Endothelial cell of umbilical vein (primary cell): ENCODE measurements at regions of chr9 and their contacts with region 1.

Region 1: GRCh38 chr9:113929634-113930389 is 53.7 kb downstream of the ZNF618 start:
- DNase-seq: peak; percentile 98
- H3K4me3 ChIP-seq: no peak overlapping the region
- H3K27ac ChIP-seq: peak overlapping the region; percentile 70
- H3K4me1 ChIP-seq: peaks cover 30% of the 10 kb centered on the region
- H3K27me3 ChIP-seq: no peaks in the 10 kb centered on the region
- CTCF ChIP-seq: no peak
- POLR2A ChIP-seq: peak; percentile 18

Region 2: GRCh38 chr9:113331780-113332179 is 598.0 kb before region 1 on chr9:
- CTCF ChIA-PET with region 1: no interaction called
- POLR2A ChIA-PET with region 1: no interaction called
- dilution Hi-C with region 1: no loop called
- intact Hi-C with region 1: no loop called
- DNase-seq: no peak
- H3K4me3 ChIP-seq: no peak overlapping the region
- H3K27ac ChIP-seq: no peak overlapping the region
- H3K4me1 ChIP-seq: no peaks in the 10 kb centered on the region
- H3K27me3 ChIP-seq: peaks cover 0 to 5% of the 10 kb centered on the region in 2 experiments
- CTCF ChIP-seq: no peak
- POLR2A ChIP-seq: no peak

Region 3: GRCh38 chr9:113892861-113893491 is 36.8 kb before region 1 on chr9:
- CTCF ChIA-PET with region 1: no interaction called
- POLR2A ChIA-PET with region 1: no interaction called
- dilution Hi-C with region 1: no loop called
- intact Hi-C with region 1: loop called (anchors 5 kb)
- DNase-seq: no peak
- H3K4me3 ChIP-seq: no peak overlapping the region
- H3K27ac ChIP-seq: no peak overlapping the region
- H3K4me1 ChIP-seq: peaks cover 16% of the 10 kb centered on the region
- H3K27me3 ChIP-seq: no peaks in the 10 kb centered on the region
- CTCF ChIP-seq: no peak
- POLR2A ChIP-seq: no peak

Region 4: GRCh38 chr9:113957821-113958341 is 28.1 kb after region 1 on chr9:
- CTCF ChIA-PET with region 1: interaction called, 21 read pairs
- POLR2A ChIA-PET with region 1: interaction called, 5 read pairs
- dilution Hi-C with region 1: no loop called
- intact Hi-C with region 1: loop called (anchors 1 kb)
- DNase-seq: peak; percentile 77
- H3K4me3 ChIP-seq: no peak overlapping the region
- H3K27ac ChIP-seq: peak overlapping the region; percentile 98
- H3K4me1 ChIP-seq: peaks cover 58% of the 10 kb centered on the region
- H3K27me3 ChIP-seq: no peaks in the 10 kb centered on the region
- CTCF ChIP-seq: no peak
- POLR2A ChIP-seq: no peak

Region 5: GRCh38 chr9:113993838-113994540 is 64.2 kb after region 1 on chr9:
- CTCF ChIA-PET with region 1: interaction called, 3 read pairs
- POLR2A ChIA-PET with region 1: no interaction called
- dilution Hi-C with region 1: no loop called
- intact Hi-C with region 1: loop called (anchors 2 kb)
- DNase-seq: peak; percentile 95
- H3K4me3 ChIP-seq: no peak overlapping the region
- H3K27ac ChIP-seq: peak overlapping the region; percentile 40
- H3K4me1 ChIP-seq: peaks cover 42% of the 10 kb centered on the region
- H3K27me3 ChIP-seq: no peaks in the 10 kb centered on the region
- CTCF ChIP-seq: no peak
- POLR2A ChIP-seq: no peak